ENCODE measurements at regions of chr1 and their contacts with region 1.

Region 1: GRCh38 chr1:17059739-17060460 is 6.1 kb upstream of the SDHB start:
- DNase-seq: peak; percentile 66
- H3K4me3 ChIP-seq: no peak overlapping the region
- H3K27ac ChIP-seq: no peak overlapping the region
- H3K4me1 ChIP-seq: no peaks in the 10 kb centered on the region
- H3K27me3 ChIP-seq: no peaks in the 10 kb centered on the region
- CTCF ChIP-seq: peak; percentile 50

Region 2: GRCh38 chr1:17119773-17120480 is 60.0 kb after region 1 on chr1:
- intact Hi-C with region 1: loop called (anchors 5 kb)
- DNase-seq: no peak
- H3K4me3 ChIP-seq: peak overlapping the region; percentile 47
- H3K27ac ChIP-seq: no peak overlapping the region
- H3K4me1 ChIP-seq: peaks cover 4% of the 10 kb centered on the region
- H3K27me3 ChIP-seq: no peaks in the 10 kb centered on the region
- CTCF ChIP-seq: no peak

Region 3: DNA sequence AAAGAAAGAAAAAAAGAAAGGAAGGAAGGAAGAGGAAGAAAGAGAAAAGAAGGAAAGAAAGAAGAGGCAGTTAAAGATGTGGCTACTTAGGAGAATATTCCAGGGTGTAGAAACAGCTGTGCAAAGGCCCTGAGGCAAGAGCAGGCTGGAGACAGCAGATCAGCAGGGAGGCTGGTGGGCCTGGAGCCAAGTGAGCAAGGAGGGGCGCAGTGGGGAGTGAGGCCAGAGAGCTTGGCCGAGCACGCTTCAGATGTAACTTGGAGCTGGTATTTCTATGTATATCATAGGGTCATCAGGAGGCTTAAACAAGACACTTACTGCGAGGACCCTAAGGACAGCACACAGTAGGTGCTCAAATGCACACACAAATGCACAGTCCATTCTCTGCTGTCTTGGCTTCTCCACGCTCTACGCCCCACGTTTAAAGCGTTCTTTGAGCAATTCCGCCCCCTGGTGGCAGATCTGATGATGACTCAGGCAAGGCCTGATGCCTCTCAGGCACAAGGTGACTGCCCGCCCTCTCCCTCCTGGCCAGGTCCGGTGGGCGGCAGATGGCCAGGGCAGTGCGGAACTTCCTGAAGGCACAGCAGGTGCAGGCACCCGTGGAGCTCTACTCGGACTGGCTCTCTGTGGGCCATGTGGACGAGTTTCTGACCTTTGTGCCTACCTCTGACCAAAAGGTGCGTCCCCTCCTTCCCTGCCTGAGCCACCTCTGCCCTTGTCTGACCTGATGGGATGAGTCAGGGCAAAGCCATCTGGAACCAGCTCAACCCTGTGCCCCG is 177.1 kb after region 1 on chr1:
- intact Hi-C with region 1: loop called (anchors 5 kb)
- DNase-seq: peak; percentile 95
- H3K4me3 ChIP-seq: no peak overlapping the region
- H3K27ac ChIP-seq: no peak overlapping the region
- H3K4me1 ChIP-seq: peaks cover 11% of the 10 kb centered on the region
- H3K27me3 ChIP-seq: no peaks in the 10 kb centered on the region
- CTCF ChIP-seq: peak; percentile 91

Measured in colonic mucosa (tissue), 4 donors.